Aorta (tissue), 5 donors: ENCODE measurements at regions of chr19 and their contacts with region 1.

Region 1: GRCh38 chr19:1103708-1104310 is at the start of gene GPX4:
- DNase-seq: peak; percentile 100
- ATAC-seq: peak; percentile 91
- H3K4me3 ChIP-seq: peak within 1 kb of the TSS; percentile 81 to 85
- H3K27ac ChIP-seq: peak within 1 kb of the TSS; percentile 80 to 98
- H3K4me1 ChIP-seq: no peaks in the 10 kb centered on the region
- H3K27me3 ChIP-seq: no peaks in the 10 kb centered on the region
- total RNA-seq, gene GPX4: 165 to 236 TPM

Region 2: DNA sequence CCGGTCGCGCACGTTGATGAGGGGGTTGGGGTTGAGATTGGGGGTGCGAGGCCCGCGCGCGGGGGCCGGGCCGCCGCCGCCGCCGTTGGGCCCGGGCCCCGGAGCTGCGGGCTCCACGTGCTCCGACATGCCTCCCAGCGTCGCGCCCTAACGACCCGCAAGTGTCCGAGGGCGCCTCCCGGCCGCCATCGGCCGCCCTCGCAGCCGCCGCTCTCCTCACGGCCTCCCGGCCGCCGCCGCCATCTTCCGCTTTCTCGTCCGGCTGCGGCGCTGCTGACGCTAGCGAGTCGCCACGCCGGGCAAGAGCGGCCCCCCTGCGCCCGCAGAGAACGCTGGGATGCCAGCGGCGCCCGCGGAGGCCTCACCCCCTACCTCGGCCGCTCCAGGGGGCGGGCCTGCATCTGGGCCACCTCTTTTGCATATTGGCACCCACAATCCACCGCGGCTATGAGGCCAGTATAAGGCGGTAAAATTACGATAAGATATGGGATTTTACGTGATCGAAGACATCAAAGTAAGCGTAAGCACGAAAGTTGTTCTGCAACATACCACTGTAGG is 82.9 kb before region 1 on chr19 and contains the start of gene TMEM259:
- intact Hi-C with region 1: loop called (anchors 2 to 5 kb)
- DNase-seq: peak; percentile 98 to 99
- ATAC-seq: peak; percentile 96
- H3K4me3 ChIP-seq: peak within 1 kb of the TSS; percentile 36 to 78
- H3K27ac ChIP-seq: peak within 1 kb of the TSS in 1 of 2 donors; percentile 87
- H3K4me1 ChIP-seq: no peaks in the 10 kb centered on the region
- H3K27me3 ChIP-seq: no peaks in the 10 kb centered on the region
- total RNA-seq, gene TMEM259: 118 to 142 TPM

Region 3: GRCh38 chr19:1026189-1027019 is 77.4 kb before region 1 on chr19 and contains the start of gene CNN2:
- intact Hi-C with region 1: loop called (anchors 2 to 5 kb)
- DNase-seq: peak; percentile 89 to 95
- ATAC-seq: peak; percentile 87
- H3K4me3 ChIP-seq: peak within 1 kb of the TSS; percentile 98
- H3K27ac ChIP-seq: peak within 1 kb of the TSS; percentile 99 to 100
- H3K4me1 ChIP-seq: no peaks in the 10 kb centered on the region
- H3K27me3 ChIP-seq: no peaks in the 10 kb centered on the region
- total RNA-seq, gene CNN2: 142 to 185 TPM